Ovary (tissue), 10 donors: ENCODE measurements at regions of chr6 and their contacts with region 1.

Region 1: GRCh38 chr6:70667711-70668498 is at the start of gene SMAP1:
- DNase-seq: peak; percentile 93 to 96 (median 94)
- H3K4me3 ChIP-seq: peak within 1 kb of the TSS; percentile 93
- H3K27ac ChIP-seq: peak within 1 kb of the TSS; percentile 69 to 86
- H3K4me1 ChIP-seq: peaks cover under 1% of the 10 kb centered on the region
- H3K27me3 ChIP-seq: no peaks in the 10 kb centered on the region
- CTCF ChIP-seq: no peak
- EP300 ChIP-seq: no peak
- POLR2A ChIP-seq: peak; percentile 67
- total RNA-seq, gene SMAP1: 10.8 to 22.3 (median 18.6) TPM

Region 2: DNA sequence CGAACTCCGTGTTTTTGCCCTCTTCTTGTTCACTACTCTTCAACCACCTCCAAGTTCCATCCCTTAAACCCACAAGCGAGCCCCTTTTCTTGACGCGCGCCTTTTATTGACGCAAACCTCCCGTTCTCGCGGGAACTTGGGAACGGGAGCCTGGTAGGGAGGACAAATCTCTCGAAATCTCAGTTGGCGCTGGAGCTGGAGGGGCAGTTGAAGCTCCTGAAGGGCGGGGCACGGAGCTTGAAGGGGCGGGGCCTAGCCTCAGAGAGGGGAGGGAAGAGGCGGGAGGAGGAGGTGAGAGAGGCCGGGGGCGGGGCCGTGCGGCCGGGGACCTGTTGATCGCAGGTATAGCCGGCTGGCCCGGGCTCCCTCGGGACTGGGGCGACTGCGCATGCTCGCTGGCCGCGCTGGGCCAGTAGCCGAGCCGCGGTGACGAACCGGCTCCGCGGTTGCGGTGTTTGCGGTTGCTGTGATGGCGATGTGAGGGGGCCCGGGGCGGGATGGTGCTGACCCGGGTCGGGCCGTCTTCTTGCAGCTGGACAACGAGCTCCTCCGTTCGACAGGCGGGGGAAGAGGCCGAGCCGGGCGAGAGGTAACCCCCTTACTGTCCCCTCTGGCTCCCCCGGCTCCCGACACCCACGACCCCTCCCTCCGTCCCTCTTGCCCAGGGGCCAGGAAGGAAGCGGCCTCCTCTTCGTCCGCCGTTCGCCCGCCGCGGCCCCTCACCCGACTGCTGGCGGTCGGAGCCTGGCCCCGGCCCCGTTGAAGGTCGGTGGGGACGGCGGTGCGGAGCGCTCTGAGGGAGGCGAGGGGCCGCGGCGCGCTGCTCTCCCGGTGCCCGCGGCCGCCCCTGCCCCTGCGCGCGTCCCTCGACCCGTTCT is 254.6 kb before region 1 on chr6 and contains the start of gene FAM135A:
- intact Hi-C with region 1: loop called in 1 of 4 experiments (anchors 10 kb)
- DNase-seq: peak; percentile 97 to 99 (median 98)
- H3K4me3 ChIP-seq: peak within 1 kb of the TSS; percentile 96
- H3K27ac ChIP-seq: peak within 1 kb of the TSS; percentile 78 to 86
- H3K4me1 ChIP-seq: peaks cover 2% of the 10 kb centered on the region
- H3K27me3 ChIP-seq: no peaks in the 10 kb centered on the region
- CTCF ChIP-seq: no peak
- EP300 ChIP-seq: no peak
- POLR2A ChIP-seq: peak; percentile 52
- total RNA-seq, gene FAM135A: 19.7 to 34.1 (median 25.7) TPM